Psoas muscle (tissue), 8 donors: ENCODE measurements at regions of chr10 and their contacts with region 1.

Region 1: GRCh38 chr10:99732033-99732912 is at the starts of genes COX15 and CUTC:
- DNase-seq: peak; percentile 96 to 99
- ATAC-seq: peak; percentile 92 to 93 (median 93)
- H3K4me3 ChIP-seq: peak within 1 kb of the TSS; percentile 95
- H3K27ac ChIP-seq: peak within 1 kb of the TSS; percentile 98
- H3K4me1 ChIP-seq: peaks cover 51% of the 10 kb centered on the region
- H3K27me3 ChIP-seq: no peaks in the 10 kb centered on the region
- CTCF ChIP-seq: peak; percentile 46
- total RNA-seq, gene COX15: 25.9 to 59.4 (median 39.4) TPM
- total RNA-seq, gene CUTC: 108 to 179 (median 133) TPM

Region 2: DNA sequence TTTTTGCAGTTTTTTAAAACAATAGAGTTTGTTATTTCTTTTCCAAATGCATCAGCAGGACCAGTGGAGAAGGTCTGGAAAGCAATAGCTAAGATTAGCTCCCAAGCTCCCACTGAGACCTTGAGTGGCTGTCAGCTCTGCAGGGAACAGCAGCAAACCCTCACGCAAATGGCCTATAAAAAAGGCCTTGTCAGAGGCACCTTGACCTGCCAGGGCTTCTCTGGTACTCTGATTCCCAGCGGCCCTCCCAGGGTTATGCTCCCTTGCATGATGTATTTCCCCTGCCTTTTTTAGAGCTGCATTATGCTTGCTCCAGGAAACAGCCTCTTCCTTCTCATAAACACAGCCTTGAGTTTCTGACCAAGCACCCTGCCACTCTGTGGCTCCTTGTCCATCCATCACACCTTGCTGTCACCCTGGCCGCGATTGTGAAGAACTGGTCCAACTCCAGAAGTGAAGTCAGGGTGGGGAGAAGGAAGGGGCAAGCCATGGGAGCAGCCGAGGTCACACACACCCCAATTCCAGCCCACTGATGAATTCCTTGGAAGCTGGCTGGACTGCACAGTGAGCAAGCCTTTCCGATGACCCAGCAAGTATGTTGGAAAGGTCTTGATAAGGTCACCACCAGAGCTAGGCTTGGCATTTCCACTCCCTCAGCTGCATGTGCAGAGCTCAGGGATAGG is 234.8 kb before region 1 on chr10:
- intact Hi-C with region 1: no loop called
- DNase-seq: no peak
- ATAC-seq: no peak
- H3K4me3 ChIP-seq: no peak overlapping the region
- H3K27ac ChIP-seq: no peak overlapping the region
- H3K4me1 ChIP-seq: no peaks in the 10 kb centered on the region
- H3K27me3 ChIP-seq: peaks cover 0 to 5% (median 4%) of the 10 kb centered on the region in 3 donors
- CTCF ChIP-seq: no peak

Region 3: DNA sequence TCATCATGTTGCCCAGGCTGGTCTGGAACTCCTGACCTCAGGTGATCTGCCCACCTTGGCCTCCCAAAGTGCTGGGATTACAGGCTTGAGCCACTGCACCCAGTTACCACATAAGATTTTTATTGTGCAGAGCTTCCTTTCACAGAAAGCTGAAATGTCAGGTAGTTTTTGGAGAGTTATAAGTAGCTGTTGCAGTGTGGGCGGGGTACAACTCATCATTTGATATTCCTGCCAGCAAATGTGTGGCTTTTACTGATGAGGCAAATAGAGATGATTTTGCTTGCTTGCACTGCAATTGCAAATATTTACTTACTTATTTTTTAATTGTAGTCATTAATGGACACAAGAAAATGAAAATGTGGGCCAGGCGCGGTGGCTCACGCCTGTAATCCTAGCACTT is 167.1 kb before region 1 on chr10:
- intact Hi-C with region 1: no loop called
- DNase-seq: no peak
- ATAC-seq: no peak
- H3K4me3 ChIP-seq: no peak overlapping the region
- H3K27ac ChIP-seq: no peak overlapping the region
- H3K4me1 ChIP-seq: no peaks in the 10 kb centered on the region
- H3K27me3 ChIP-seq: peaks cover 0 to 8% (median 0%) of the 10 kb centered on the region in 3 donors
- CTCF ChIP-seq: no peak

Region 4: DNA sequence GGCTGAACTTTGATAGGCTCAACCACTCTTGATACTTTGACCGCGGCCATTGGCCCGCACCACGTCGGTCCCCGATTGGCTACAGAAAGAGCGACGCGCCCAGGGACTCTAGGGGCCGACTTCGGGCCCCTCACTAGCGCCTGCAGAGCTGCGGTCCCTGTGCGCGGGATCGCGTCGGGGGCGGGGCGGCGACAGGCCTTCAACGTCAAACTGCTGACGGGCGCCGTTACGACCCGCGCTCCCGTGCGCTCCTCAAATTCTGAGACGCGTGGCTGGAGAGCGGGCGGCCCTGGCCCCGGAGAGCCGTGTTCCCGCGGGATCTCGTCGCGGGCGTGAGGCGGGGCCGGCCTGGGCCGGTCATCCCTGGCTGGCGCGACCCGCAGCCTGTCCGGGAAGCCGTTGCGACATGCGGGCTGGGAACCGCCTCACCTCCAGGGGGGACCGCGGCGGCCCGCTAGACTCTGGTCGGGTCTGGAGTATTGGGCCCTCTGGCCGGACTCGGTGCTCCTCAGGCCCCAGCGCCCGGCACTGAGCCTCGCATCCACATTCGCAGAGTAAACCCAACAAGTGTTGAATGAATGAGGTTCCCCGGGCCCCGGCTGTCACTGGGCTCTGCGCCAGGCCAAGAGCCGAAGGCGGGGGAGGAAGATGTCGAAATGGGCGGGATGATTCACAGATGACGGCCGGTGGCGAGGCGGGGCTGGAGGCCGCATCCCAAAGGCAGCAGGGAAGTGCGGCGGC is 111.4 kb before region 1 on chr10:
- intact Hi-C with region 1: loop called in 1 of 2 experiments (anchors 1 kb)
- DNase-seq: peak; percentile 95 to 97
- ATAC-seq: peak; percentile 90 to 91 (median 90)
- H3K4me3 ChIP-seq: peak overlapping the region; percentile 83
- H3K27ac ChIP-seq: peak overlapping the region; percentile 92
- H3K4me1 ChIP-seq: peaks cover 31% of the 10 kb centered on the region
- H3K27me3 ChIP-seq: no peaks in the 10 kb centered on the region
- CTCF ChIP-seq: peak; percentile 5

Region 5: GRCh38 chr10:99769706-99770105 is 37.4 kb after region 1 on chr10:
- intact Hi-C with region 1: loop called in 1 of 2 experiments (anchors 2 kb)
- DNase-seq: no peak
- ATAC-seq: peak; percentile 9 to 30 (median 28)
- H3K4me3 ChIP-seq: no peak overlapping the region
- H3K27ac ChIP-seq: peak overlapping the region; percentile 78
- H3K4me1 ChIP-seq: peaks cover 12% of the 10 kb centered on the region
- H3K27me3 ChIP-seq: no peaks in the 10 kb centered on the region
- CTCF ChIP-seq: no peak